Activated naive CD4-positive, alpha-beta T cell treated with anti-CD3 and anti-CD28 coated beads for 36 hours (primary cell): ENCODE measurements at regions of chr18 and their contacts with region 1.

Region 1: DNA sequence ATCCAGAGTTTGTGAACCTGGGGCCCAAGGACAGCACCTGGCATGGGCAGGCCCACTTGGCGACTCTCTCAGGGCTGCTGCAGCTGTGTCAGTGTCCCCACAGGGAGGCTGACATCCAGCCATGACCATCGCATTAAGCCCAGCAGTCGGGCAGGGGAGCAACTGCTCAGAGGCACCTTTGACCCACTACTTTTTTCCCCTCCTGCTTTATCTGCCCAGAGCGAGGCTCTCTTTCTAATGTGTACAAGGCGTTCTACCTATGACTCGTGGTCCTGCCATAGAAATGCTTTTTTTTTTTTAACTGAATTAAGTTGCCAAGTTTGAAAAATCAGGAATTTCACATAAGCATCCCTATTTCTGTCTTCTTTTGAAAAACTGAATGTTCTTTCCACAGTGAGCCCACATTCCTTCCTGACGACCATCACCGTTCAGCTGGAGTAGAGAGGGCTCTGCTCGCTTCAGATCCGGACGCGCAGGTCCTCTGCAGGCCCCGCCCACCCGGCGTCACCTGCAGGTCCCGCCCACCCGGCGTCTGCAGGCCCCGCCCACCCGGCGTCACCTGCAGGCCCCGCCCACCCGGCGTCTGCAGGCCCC is 403 bp upstream of the CLUL1 start:
- DNase-seq: no peak
- H3K4me3 Mint-ChIP-seq: no peak overlapping the region
- H3K27ac Mint-ChIP-seq: no peak overlapping the region
- H3K4me1 Mint-ChIP-seq: peaks cover 4% of the 10 kb centered on the region
- H3K27me3 Mint-ChIP-seq: peaks cover 17% of the 10 kb centered on the region

Region 2: DNA sequence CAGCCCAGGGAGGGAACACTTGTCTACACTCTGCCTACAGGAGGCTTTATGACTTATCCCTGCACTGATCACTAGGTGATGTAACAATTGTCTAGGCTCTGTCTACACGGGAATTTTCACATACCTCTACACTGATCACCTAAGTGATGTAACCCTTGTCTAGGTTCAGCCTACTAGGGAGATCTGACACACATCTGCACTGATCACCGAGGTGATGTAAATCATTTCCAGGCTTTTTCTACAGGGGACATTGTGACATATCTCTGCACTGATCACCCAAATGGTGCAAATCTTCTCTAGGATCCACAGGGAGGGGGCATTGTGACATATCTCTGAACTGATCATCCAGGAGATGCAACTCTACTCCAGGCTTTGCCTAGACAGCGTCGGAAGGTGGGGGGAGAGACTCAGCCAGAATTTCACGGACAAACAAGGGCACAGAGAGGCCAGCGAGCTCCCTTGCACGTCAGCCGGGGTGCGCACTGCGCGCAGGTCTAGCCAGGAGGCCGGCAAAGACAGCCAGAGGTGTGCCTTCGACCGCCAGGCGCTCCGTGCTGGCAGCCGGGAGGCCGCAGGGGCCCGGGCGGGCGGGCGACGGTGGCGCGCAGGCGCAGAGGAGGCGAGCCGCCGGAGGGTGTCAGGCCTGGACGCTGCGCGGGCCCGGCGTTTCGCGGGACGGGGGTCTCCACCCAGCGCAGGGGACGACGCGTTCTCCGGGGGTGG is 484.9 kb before region 1 on chr18:
- CTCF ChIA-PET with region 1: no interaction called
- intact Hi-C with region 1: loop called (anchors 5 kb)
- DNase-seq: peak; percentile 69
- H3K4me3 Mint-ChIP-seq: peak overlapping the region; percentile 84
- H3K27ac Mint-ChIP-seq: peak overlapping the region; percentile 96
- H3K4me1 Mint-ChIP-seq: peaks cover 16% of the 10 kb centered on the region
- H3K27me3 Mint-ChIP-seq: no peaks in the 10 kb centered on the region

Region 3: GRCh38 chr18:267688-268552 is 328.5 kb before region 1 on chr18 and contains the start of gene THOC1:
- CTCF ChIA-PET with region 1: no interaction called
- intact Hi-C with region 1: loop called (anchors 1 kb)
- DNase-seq: peak; percentile 97
- H3K4me3 Mint-ChIP-seq: peak within 1 kb of the TSS; percentile 95
- H3K27ac Mint-ChIP-seq: peak within 1 kb of the TSS; percentile 99
- H3K4me1 Mint-ChIP-seq: peaks cover 39% of the 10 kb centered on the region
- H3K27me3 Mint-ChIP-seq: no peaks in the 10 kb centered on the region
- total RNA-seq, gene THOC1: 63.5 to 66.2 TPM

Region 4: GRCh38 chr18:543447-544078 is 52.8 kb before region 1 on chr18:
- CTCF ChIA-PET with region 1: no interaction called
- intact Hi-C with region 1: no loop called
- DNase-seq: no peak
- H3K4me3 Mint-ChIP-seq: no peak overlapping the region
- H3K27ac Mint-ChIP-seq: no peak overlapping the region
- H3K4me1 Mint-ChIP-seq: no peaks in the 10 kb centered on the region
- H3K27me3 Mint-ChIP-seq: no peaks in the 10 kb centered on the region

Region 5: DNA sequence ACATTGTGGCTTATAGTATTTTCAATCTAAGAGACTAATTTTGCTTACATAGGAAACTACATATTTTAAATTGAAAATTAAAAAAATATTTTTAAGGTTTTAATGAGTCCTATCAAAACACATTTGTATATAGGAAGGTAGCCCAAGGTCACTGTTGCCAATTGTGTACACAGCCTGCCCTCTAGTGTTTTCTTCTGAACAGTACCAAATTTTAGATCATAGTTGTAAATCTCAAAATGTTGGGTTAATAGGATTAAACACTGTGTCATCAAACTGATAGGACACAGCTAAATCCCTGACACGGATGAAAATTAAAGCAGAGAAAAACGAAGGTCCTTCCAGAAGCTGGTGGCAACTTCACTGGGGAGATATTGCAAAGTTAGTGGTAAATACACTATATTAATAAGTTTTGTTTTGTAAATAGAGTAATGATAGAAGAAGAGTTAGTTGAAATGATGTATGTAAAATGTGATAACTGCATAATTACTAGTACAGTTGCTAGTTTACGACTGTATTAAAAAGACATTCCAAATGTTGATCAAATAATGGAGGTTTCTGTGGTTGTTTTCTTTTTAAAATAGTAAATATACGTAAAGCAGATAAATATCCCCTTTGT is 20.1 kb after region 1 on chr18:
- CTCF ChIA-PET with region 1: interaction called, 3 read pairs
- intact Hi-C with region 1: loop called (anchors 1 kb)
- DNase-seq: peak; percentile 8
- H3K4me3 Mint-ChIP-seq: no peak overlapping the region
- H3K27ac Mint-ChIP-seq: no peak overlapping the region
- H3K4me1 Mint-ChIP-seq: no peaks in the 10 kb centered on the region
- H3K27me3 Mint-ChIP-seq: no peaks in the 10 kb centered on the region

Region 6: GRCh38 chr18:754666-755065 is 158.3 kb after region 1 on chr18:
- CTCF ChIA-PET with region 1: no interaction called
- intact Hi-C with region 1: no loop called
- DNase-seq: no peak
- H3K4me3 Mint-ChIP-seq: no peak overlapping the region
- H3K27ac Mint-ChIP-seq: no peak overlapping the region
- H3K4me1 Mint-ChIP-seq: no peaks in the 10 kb centered on the region
- H3K27me3 Mint-ChIP-seq: no peaks in the 10 kb centered on the region

Region 7: DNA sequence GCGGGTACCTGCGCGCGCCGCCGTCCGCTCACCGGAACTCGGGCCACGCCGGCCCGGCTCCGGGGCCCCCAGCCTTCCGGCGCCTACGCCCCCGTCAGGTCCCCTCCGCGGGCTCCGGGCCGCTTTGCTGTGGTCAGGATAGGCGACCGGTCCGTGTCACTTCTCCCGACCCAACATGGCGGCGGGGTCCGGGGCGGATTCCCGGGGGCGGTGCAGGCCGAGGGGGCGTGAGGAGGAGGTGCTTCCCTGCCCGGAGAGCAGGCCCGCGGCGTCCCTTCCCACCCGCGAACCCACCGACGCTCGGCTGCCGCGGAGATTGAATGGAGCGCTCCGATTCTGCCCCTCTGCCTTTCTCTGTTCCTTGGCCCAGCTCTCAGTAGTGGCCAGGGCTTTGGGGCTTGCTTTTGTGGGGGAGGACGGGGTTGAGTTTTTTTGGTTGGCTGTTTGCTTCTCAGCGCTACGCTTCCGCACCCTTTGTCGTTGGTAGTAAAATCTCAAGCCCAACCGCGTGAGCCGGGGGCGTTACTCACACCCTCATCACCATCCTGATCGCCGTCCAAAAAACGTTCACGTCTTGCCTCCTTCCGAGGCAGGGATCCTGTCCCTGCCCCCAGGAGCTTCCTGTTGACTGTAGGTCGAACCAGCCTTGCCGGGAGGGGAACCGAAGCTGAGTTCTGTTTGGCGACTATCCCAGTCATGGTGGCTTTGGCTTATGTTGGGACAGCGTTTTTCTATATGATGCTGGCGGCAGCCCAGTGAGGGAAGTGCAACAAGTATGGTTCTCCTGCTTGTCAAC is 216.2 kb after region 1 on chr18:
- CTCF ChIA-PET with region 1: no interaction called
- intact Hi-C with region 1: no loop called
- DNase-seq: peak; percentile 82
- H3K4me3 Mint-ChIP-seq: peak overlapping the region; percentile 95
- H3K27ac Mint-ChIP-seq: peak overlapping the region; percentile 99
- H3K4me1 Mint-ChIP-seq: peaks cover 54% of the 10 kb centered on the region
- H3K27me3 Mint-ChIP-seq: no peaks in the 10 kb centered on the region

Region 8: DNA sequence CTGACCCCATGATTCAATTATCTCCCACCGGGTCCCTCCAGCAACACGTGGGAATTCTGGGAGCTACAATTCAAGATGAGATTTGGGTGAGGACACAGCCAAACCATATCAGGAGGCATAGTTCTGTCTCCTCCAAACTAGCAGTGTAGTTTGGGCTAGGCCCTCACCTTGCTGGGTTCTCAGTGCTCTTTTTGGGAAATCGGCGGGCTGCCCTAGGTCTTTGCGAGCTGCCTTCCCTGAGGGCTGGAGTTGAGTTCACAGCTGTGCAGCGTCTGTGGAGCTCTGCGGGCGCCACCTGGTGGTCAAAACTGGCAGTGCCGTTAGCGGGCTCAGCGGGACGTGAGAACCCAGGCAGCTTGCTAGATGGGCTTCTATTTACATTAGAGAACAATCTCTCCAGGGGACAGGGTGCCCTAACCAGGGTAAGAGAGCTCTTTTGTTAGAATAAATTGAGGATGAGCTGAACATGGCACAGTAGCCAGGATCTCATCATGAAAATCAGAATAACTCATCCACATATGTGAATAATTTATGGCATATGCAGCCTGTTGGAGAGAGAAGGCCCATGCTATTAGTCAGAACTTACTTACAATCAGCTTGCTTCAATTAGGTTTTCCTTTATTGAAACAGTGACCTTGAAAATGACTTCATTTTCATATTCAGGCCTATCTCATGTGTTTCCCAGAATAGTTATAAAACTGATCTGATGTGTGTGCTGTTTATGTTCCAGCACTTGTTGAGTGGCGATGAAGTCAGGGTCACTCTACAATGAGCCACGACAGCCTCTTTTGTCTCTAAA is 243.0 kb after region 1 on chr18:
- CTCF ChIA-PET with region 1: interaction called, 3 read pairs
- intact Hi-C with region 1: loop called (anchors 1 kb)
- DNase-seq: peak; percentile 93
- H3K4me3 Mint-ChIP-seq: no peak overlapping the region
- H3K27ac Mint-ChIP-seq: no peak overlapping the region
- H3K4me1 Mint-ChIP-seq: peaks cover 8% of the 10 kb centered on the region
- H3K27me3 Mint-ChIP-seq: no peaks in the 10 kb centered on the region